Naive thymus-derived CD8-positive, alpha-beta T cell (primary cell): ENCODE measurements at regions of chr11 and their contacts with region 1.

Region 1: GRCh38 chr11:67353317-67354074 is at the start of gene POLD4:
- DNase-seq: peak; percentile 90 to 98 (median 94)
- ATAC-seq: peak; percentile 85 to 89
- H3K4me3 Mint-ChIP-seq: peak within 1 kb of the TSS; percentile 93 to 100 (median 97)
- H3K27ac Mint-ChIP-seq: peak within 1 kb of the TSS; percentile 98 to 100 (median 99)
- H3K4me1 Mint-ChIP-seq: peaks cover 22 to 85% (median 58%) of the 10 kb centered on the region in 4 donors
- H3K27me3 Mint-ChIP-seq: no peaks in the 10 kb centered on the region
- polyA plus RNA-seq, gene POLD4: 87.7 to 105 (median 102) TPM

Region 2: GRCh38 chr11:67277231-67277961 is 76.1 kb before region 1 on chr11:
- POLR2A ChIA-PET with region 1: interaction called, 14 read pairs
- DNase-seq: peak; percentile 84 to 95 (median 90)
- ATAC-seq: peak; percentile 89 to 96
- H3K4me3 Mint-ChIP-seq: peak overlapping the region; percentile 74 to 98 (median 86)
- H3K27ac Mint-ChIP-seq: peak overlapping the region; percentile 90 to 100 (median 98)
- H3K4me1 Mint-ChIP-seq: peaks cover 28 to 83% (median 78%) of the 10 kb centered on the region in 4 donors
- H3K27me3 Mint-ChIP-seq: no peaks in the 10 kb centered on the region

Region 3: GRCh38 chr11:67337257-67337656 is 16.2 kb before region 1 on chr11:
- POLR2A ChIA-PET with region 1: interaction called, 81 read pairs
- DNase-seq: no peak
- ATAC-seq: no peak
- H3K4me3 Mint-ChIP-seq: no peak overlapping the region
- H3K27ac Mint-ChIP-seq: no peak overlapping the region
- H3K4me1 Mint-ChIP-seq: peaks cover 0 to 2% (median under 1%) of the 10 kb centered on the region in 4 donors
- H3K27me3 Mint-ChIP-seq: no peaks in the 10 kb centered on the region

Region 4: GRCh38 chr11:67401495-67402191 is 48.1 kb after region 1 on chr11 and contains the start of gene PPP1CA:
- POLR2A ChIA-PET with region 1: interaction called, 55 read pairs
- DNase-seq: peak; percentile 82 to 98 (median 93)
- ATAC-seq: peak; percentile 62 to 71
- H3K4me3 Mint-ChIP-seq: peak within 1 kb of the TSS; percentile 87 to 99 (median 97)
- H3K27ac Mint-ChIP-seq: peak within 1 kb of the TSS; percentile 85 to 96 (median 93)
- H3K4me1 Mint-ChIP-seq: peaks cover 18 to 79% (median 62%) of the 10 kb centered on the region in 4 donors
- H3K27me3 Mint-ChIP-seq: no peaks in the 10 kb centered on the region
- polyA plus RNA-seq, gene PPP1CA: 357 to 518 (median 403) TPM

Region 5: DNA sequence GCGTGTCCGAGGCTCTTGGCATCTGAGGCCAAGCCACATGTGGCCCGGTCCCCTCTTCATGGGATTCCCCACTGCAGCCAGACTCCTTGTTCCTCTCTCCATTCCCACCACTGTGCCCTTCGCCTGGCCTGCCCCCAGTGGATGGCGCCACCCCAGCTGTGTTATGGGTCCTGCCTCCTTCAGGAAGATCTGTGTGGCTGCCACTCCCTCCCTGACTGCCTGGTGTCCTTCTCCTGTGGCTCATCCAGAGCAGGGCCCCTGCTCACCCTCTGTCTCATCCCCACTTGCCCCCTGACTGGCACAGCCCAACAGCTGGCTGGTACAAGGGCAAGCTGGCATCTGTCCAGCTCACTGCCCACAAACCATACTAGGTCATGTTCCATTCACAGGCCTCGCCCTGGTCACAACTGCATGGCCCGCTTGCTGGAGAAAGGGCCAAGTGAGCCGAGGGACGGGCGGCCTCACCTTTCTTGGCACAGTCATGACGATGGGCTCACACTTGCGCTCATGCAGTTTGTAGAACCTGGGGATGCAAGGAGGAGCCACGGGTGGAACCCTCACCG is 85.9 kb after region 1 on chr11:
- POLR2A ChIA-PET with region 1: interaction called, 32 read pairs
- DNase-seq: peak in 4 of 10 donors; percentile 22 to 35 (median 26)
- ATAC-seq: no peak
- H3K4me3 Mint-ChIP-seq: peak overlapping the region; percentile 82 to 100 (median 96)
- H3K27ac Mint-ChIP-seq: peak overlapping the region; percentile 87 to 97 (median 94)
- H3K4me1 Mint-ChIP-seq: peaks cover 31 to 79% (median 67%) of the 10 kb centered on the region in 4 donors
- H3K27me3 Mint-ChIP-seq: no peaks in the 10 kb centered on the region